AG04450 (cell line): ENCODE measurements at regions of chr14 and their contacts with region 1.

Region 1: GRCh38 chr14:73591690-73592448 is at the start of gene ACOT4:
- DNase-seq: no peak
- H3K4me3 ChIP-seq: peak within 1 kb of the TSS; percentile 56
- H3K27ac ChIP-seq: no peak within 1 kb of the TSS
- H3K27me3 ChIP-seq: no peaks in the 10 kb centered on the region
- CTCF ChIP-seq: no peak
- polyA plus RNA-seq, gene ACOT4: 0.37 and 0.45 TPM in 2 replicates

Region 2: GRCh38 chr14:73209953-73210352 is 381.9 kb before region 1 on chr14:
- CTCF ChIA-PET with region 1: no interaction called
- POLR2A ChIA-PET with region 1: interaction called, 12 read pairs
- DNase-seq: no peak
- H3K4me3 ChIP-seq: no peak overlapping the region
- H3K27ac ChIP-seq: no peak overlapping the region
- H3K27me3 ChIP-seq: no peaks in the 10 kb centered on the region
- CTCF ChIP-seq: no peak

Region 3: DNA sequence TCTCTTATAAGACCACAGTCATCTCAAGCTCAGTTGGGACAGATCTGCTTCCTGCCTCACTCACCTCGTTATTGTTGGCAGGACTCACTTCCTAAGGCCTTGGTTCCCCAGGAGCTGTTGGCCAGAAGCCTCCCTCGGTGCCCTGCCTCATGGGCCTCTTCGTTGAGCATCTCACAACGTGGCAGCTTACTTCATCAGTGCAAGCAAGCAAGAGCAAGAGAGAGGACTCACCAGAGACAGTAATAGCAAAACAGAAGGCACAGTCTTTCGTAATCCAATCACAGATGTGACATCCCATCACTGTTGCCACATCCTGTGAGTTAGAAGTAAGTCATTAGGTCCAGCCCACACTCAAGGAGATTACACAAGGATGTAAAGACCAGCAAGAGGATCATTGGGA is 128.5 kb before region 1 on chr14:
- CTCF ChIA-PET with region 1: no interaction called
- POLR2A ChIA-PET with region 1: no interaction called
- DNase-seq: peak; percentile 75
- H3K4me3 ChIP-seq: peak overlapping the region; percentile 39
- H3K27ac ChIP-seq: peak overlapping the region; percentile 69
- H3K27me3 ChIP-seq: no peaks in the 10 kb centered on the region
- CTCF ChIP-seq: no peak